GM18951 (cell line): ENCODE measurements at regions of chr20 and their contacts with region 1.

Region 1: GRCh38 chr20:60210779-60211617 is 252.8 kb downstream of the CDH26 start:
- POLR2A ChIP-seq: no peak

Region 2: DNA sequence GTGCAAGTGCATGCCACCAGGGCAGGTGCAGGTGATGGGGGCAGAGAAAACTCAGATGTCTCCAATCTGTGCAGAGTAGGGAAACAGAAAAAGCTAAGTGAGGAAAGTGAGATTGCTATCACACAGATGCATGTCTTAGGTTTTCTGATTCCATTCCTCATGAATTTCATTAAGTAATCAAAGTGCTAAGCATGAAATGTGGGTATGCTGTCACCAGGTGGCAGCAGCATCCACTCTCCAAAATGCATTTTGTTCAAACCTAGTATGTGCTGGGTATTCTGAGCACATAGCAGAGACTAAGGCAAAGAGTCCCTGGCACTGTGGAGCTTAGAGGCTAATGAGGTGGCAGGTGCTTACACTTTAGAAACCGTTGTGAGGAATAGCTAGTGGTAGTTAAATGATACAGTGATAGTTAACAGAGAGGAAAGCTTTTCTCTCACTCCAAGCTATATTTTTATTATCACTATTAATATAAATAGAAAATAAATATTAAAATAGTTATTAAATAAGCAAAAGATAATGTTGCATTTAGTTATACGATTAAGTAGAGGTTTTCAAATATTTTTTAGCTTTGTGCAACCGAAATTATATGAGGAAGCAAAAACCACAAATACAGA is 73.3 kb before region 1 on chr20:
- in situ Hi-C with region 1: no loop called
- POLR2A ChIP-seq: no peak

Region 3: GRCh38 chr20:61886721-61887594 is 1676.0 kb after region 1 on chr20:
- in situ Hi-C with region 1: loop called (anchors 25 kb)
- POLR2A ChIP-seq: no peak